Natural killer cell (primary cell): ENCODE measurements at regions of chr15 and their contacts with region 1.

Region 1: GRCh38 chr15:95929232-95929846 is 401.2 kb upstream of the NR2F2 start:
- DNase-seq: peak; percentile 16 to 25
- ATAC-seq: peak; percentile 65 to 91 (median 67)
- H3K4me3 ChIP-seq: no peak overlapping the region
- H3K4me3 Mint-ChIP-seq: peak overlapping the region; percentile 81
- H3K27ac ChIP-seq: peak overlapping the region; percentile 3
- H3K27ac Mint-ChIP-seq: peak overlapping the region; percentile 78 to 85
- H3K4me1 ChIP-seq: peaks cover 17% of the 10 kb centered on the region
- H3K4me1 Mint-ChIP-seq: peaks cover 58 to 59% of the 10 kb centered on the region in 2 donors
- H3K27me3 ChIP-seq: no peaks in the 10 kb centered on the region
- H3K27me3 Mint-ChIP-seq: no peaks in the 10 kb centered on the region
- CTCF ChIP-seq: no peak

Region 2: DNA sequence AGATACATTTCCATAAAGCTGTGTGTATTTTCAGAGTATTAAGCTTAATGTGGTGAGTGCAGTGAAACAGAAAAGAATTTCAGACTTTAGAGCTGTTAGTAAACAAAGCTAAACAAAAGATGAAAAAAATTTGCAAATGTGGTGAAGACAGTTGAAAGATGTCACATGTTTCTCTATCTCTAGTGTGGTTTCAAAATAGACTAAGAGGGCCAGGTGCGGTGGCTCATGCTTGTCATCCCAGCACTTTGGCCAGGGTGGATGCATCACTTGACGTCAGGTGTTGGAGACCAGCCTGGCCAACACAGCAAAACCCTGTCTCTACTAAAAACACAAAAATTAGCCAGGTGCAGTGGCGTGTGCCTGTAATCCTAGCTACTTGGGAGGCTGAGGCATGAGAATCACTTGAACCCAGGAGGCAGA is 64.9 kb before region 1 on chr15:
- intact Hi-C with region 1: no loop called
- DNase-seq: peak; percentile 40 to 54
- ATAC-seq: peak; percentile 66 to 79 (median 76)
- H3K4me3 ChIP-seq: no peak overlapping the region
- H3K4me3 Mint-ChIP-seq: peak overlapping the region; percentile 78
- H3K27ac ChIP-seq: peak overlapping the region; percentile 60
- H3K27ac Mint-ChIP-seq: peak overlapping the region; percentile 79 to 90
- H3K4me1 ChIP-seq: peaks cover 34% of the 10 kb centered on the region
- H3K4me1 Mint-ChIP-seq: peaks cover 66 to 67% of the 10 kb centered on the region in 2 donors
- H3K27me3 ChIP-seq: no peaks in the 10 kb centered on the region
- H3K27me3 Mint-ChIP-seq: no peaks in the 10 kb centered on the region
- CTCF ChIP-seq: no peak

Region 3: GRCh38 chr15:95884276-95884675 is 45.1 kb before region 1 on chr15:
- intact Hi-C with region 1: loop called (anchors 5 kb)
- DNase-seq: no peak
- ATAC-seq: no peak
- H3K4me3 ChIP-seq: no peak overlapping the region
- H3K4me3 Mint-ChIP-seq: no peak overlapping the region
- H3K27ac ChIP-seq: no peak overlapping the region
- H3K27ac Mint-ChIP-seq: no peak overlapping the region
- H3K4me1 ChIP-seq: peaks cover 3% of the 10 kb centered on the region
- H3K4me1 Mint-ChIP-seq: peaks cover 15 to 21% of the 10 kb centered on the region in 2 donors
- H3K27me3 ChIP-seq: no peaks in the 10 kb centered on the region
- H3K27me3 Mint-ChIP-seq: no peaks in the 10 kb centered on the region
- CTCF ChIP-seq: no peak